HCT116 (cell line): ENCODE measurements at regions of chr12 and their contacts with region 1.

Region 1: GRCh38 chr12:120116792-120117651 is 469 bp upstream of the RAB35 start:
- DNase-seq: peak; percentile 67
- ATAC-seq: peak; percentile 81
- H3K4me3 ChIP-seq: peak overlapping the region; percentile 60 to 65
- H3K27ac ChIP-seq: peak overlapping the region; percentile 70
- H3K4me1 ChIP-seq: peaks cover 17 to 27% of the 10 kb centered on the region in 2 experiments
- H3K27me3 ChIP-seq: no peaks in the 10 kb centered on the region
- CTCF ChIP-seq: no peak
- POLR2A ChIP-seq: peak; percentile 69
- RAD21 ChIP-seq: no peak

Region 2: GRCh38 chr12:119266963-119267362 is 850.1 kb before region 1 on chr12:
- CTCF ChIA-PET with region 1: no interaction called
- POLR2A ChIA-PET with region 1: no interaction called
- RAD21 ChIA-PET with region 1: no interaction called
- intact Hi-C with region 1: no loop called
- DNase-seq: no peak
- ATAC-seq: no peak
- H3K4me3 ChIP-seq: no peak overlapping the region
- H3K27ac ChIP-seq: no peak overlapping the region
- H3K4me1 ChIP-seq: no peaks in the 10 kb centered on the region
- H3K27me3 ChIP-seq: peaks cover 6% of the 10 kb centered on the region; the same call in 1 of the 2 replicates
- CTCF ChIP-seq: no peak
- POLR2A ChIP-seq: no peak
- RAD21 ChIP-seq: no peak

Region 3: GRCh38 chr12:119885549-119885948 is 231.5 kb before region 1 on chr12:
- CTCF ChIA-PET with region 1: no interaction called
- POLR2A ChIA-PET with region 1: no interaction called
- RAD21 ChIA-PET with region 1: no interaction called
- intact Hi-C with region 1: no loop called
- DNase-seq: no peak
- ATAC-seq: no peak
- H3K4me3 ChIP-seq: no peak overlapping the region
- H3K27ac ChIP-seq: no peak overlapping the region
- H3K4me1 ChIP-seq: no peaks in the 10 kb centered on the region
- H3K27me3 ChIP-seq: no peaks in the 10 kb centered on the region
- CTCF ChIP-seq: no peak
- POLR2A ChIP-seq: no peak
- RAD21 ChIP-seq: no peak

Region 4: GRCh38 chr12:120181991-120182631 is 65.1 kb after region 1 on chr12:
- CTCF ChIA-PET with region 1: no interaction called
- POLR2A ChIA-PET with region 1: no interaction called
- RAD21 ChIA-PET with region 1: no interaction called
- intact Hi-C with region 1: loop called (anchors 5 kb)
- DNase-seq: no peak
- ATAC-seq: peak; percentile 57
- H3K4me3 ChIP-seq: no peak overlapping the region
- H3K27ac ChIP-seq: no peak overlapping the region
- H3K4me1 ChIP-seq: peaks cover 0 to 9% of the 10 kb centered on the region in 2 experiments; a peak in 1 of 4 replicates
- H3K27me3 ChIP-seq: no peaks in the 10 kb centered on the region
- CTCF ChIP-seq: 0 out of 6 replicates have a peak, but pooled peaks of 1 of the 3 experiments have one; percentile 11
- POLR2A ChIP-seq: no peak
- RAD21 ChIP-seq: no peak